ENCODE measurements at regions of chr2 and their contacts with region 1.

Region 1: GRCh38 chr2:11778923-11779757 is 32.7 kb downstream of the LPIN1 start:
- DNase-seq: peak; percentile 76

Region 2: GRCh38 chr2:11598228-11598731 is 180.9 kb before region 1 on chr2:
- in situ Hi-C with region 1: no loop called
- DNase-seq: no peak

Region 3: DNA sequence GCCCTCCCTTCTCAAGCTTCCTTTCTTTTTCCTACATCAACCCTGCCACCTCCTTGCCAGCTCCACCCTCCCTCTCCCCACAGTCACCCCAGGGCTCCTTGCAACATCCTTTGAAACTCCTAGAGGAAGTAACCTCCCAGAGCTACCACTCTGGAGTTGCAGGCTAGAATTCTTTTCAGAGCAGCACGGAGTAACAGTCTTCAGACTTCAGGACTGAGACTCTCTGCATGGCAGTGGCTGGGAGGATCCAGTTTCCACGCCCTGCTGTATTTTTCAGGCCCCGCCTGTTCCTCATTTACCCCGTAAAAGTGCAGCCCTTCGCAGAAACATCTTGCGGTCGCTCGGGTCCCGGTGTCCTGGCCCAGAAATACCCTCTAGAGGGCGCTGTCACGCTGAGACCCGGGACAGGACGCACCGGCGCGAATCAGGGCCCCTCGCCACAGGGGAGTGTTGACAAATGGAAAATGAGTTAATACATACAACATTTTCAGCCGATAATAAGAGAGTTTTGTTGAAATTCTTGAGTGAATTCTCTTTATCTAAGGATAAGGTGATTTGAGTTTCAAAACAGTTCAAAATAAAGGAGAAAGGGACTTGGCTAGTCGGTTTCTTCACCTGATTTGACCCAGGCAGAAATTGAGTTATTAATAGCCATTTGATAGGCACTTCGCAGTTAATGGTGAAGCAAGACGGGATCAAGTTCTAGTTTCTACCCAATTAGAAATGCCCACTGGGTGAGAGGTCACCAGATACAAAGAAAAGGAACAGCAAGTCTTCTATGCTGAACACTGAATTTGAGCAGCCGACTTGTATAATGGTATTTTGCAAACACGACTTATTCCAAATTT is 90.7 kb before region 1 on chr2:
- in situ Hi-C with region 1: loop called (anchors 25 kb)
- DNase-seq: peak; percentile 78

Region 4: GRCh38 chr2:12008425-12009061 is 229.4 kb after region 1 on chr2:
- in situ Hi-C with region 1: no loop called
- DNase-seq: peak; percentile 48

Region 5: GRCh38 chr2:12244070-12244469 is 464.9 kb after region 1 on chr2:
- in situ Hi-C with region 1: no loop called
- DNase-seq: no peak

Measured in ACHN (cell line).